ENCODE measurements at regions of chr9 and their contacts with region 1.

Region 1: DNA sequence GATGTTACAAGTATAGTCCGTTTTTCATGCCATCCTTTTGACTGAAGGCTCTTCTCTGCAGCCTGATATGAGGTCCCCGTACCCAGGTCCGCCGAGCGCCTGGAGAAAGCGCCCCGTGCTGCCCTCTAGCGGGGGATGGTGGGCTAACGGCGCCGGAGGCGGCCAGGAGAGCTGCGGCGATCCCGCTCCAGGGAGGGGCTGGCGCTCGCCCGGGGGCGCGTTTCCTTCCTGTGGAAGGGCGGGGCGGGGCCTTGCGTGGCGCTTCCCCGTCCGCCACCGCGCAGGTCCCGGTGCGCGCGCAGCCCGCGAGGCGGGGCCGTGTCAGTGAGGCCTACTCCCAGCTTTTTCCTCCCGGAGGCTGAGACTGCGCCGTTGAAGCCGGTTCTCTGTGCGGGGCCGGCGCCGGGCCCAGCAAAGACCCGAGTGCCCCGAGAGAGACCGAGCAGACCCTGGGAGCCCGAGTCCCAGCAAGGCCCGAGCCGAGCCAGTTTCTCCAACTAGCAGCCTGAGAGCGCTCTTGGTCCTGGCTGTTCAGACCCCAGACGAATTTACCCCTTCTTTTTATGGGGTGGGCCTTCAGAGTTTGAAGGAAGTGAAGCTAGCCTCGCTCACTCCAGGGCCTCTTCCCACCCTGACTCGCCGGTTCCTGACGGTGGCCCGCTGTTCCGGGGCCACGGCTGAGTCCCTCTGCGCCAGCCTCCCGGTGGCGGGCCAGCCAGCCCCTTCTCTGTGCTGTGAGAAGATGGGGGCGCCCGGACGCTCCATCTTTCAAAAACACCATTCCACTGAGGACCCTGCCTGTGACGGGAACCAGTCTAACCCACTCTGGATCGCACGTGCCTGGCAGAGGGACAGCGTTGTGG is 9.7 kb upstream of the PHF2 start:
- DNase-seq: peak; percentile 96 to 100 (median 98)
- H3K4me3 ChIP-seq: peak overlapping the region; percentile 44 to 89 (median 73)
- H3K27ac ChIP-seq: peak overlapping the region; percentile 75 to 99 (median 95)
- H3K27me3 ChIP-seq: no peaks in the 10 kb centered on the region
- CTCF ChIP-seq: peak; percentile 75 to 100 (median 98)

Region 2: DNA sequence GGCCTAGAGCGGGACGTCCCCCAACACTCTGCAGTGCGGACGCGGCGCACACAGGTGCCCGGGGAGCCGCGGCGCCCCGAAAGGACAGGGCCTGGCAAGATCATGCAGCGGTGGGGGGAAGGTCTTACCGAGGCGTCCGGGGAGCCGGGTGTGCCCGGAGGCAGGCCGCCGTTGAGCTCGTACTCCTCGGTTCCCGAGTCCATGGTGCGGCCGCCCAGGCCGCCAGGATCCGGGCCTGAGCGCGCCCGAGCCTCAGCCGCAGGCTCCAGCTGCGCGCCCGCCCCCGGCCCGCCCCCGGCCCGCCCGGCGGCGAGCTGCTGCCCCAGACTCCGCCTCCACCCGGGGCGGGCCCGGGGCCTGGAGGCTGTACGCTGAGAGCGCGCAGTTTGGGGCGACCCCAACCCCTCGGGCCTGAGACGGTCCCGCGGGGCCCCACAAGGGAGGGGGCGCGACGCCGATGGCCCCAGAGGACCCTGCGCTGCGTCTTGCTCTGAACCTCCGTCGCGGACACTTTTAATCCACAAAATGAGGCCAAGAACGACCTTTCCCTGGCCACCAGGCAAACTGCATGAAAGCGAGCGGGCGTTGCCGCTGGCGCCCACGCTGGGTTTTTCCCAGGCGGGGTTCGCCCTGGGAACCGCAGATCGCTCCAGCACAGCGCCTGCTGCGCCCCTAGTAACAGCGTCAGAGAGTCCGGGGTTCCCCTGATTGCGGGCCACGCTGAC is 432.5 kb before region 1 on chr9 and contains the start of gene NINJ1:
- intact Hi-C with region 1: loop called in 1 of 2 experiments (anchors 10 kb)
- DNase-seq: peak in 3 of 10 donors; percentile 59 to 84 (median 74)
- H3K4me3 ChIP-seq: peak within 1 kb of the TSS; percentile 65 to 98 (median 85)
- H3K27ac ChIP-seq: peak within 1 kb of the TSS; percentile 49 to 96 (median 86)
- H3K27me3 ChIP-seq: no peaks in the 10 kb centered on the region
- CTCF ChIP-seq: peak in 2 of 56 donors; percentile 3 to 9
- total RNA-seq, gene NINJ1: 22.7 to 61.9 (median 33.5) TPM

Region 3: GRCh38 chr9:93159601-93160471 is 406.8 kb before region 1 on chr9:
- intact Hi-C with region 1: loop called in 1 of 2 experiments (anchors 5 kb)
- DNase-seq: peak; percentile 75 to 89 (median 78)
- H3K4me3 ChIP-seq: peak overlapping the region in 1 of 59 donors; percentile 16
- H3K27ac ChIP-seq: no peak overlapping the region
- H3K27me3 ChIP-seq: no peaks in the 10 kb centered on the region
- CTCF ChIP-seq: peak; percentile 71 to 98 (median 92)

Region 4: GRCh38 chr9:93453047-93453914 is 113.4 kb before region 1 on chr9 and contains the start of gene FAM120AOS:
- intact Hi-C with region 1: loop called (anchors 1 to 2 kb)
- DNase-seq: peak; percentile 88 to 99 (median 96)
- H3K4me3 ChIP-seq: peak within 1 kb of the TSS; percentile 64 to 97 (median 86)
- H3K27ac ChIP-seq: peak within 1 kb of the TSS; percentile 65 to 99 (median 94)
- H3K27me3 ChIP-seq: no peaks in the 10 kb centered on the region
- CTCF ChIP-seq: peak in 25 of 56 donors; percentile 9 to 55 (median 25)
- total RNA-seq, gene FAM120AOS: 34.2 to 62.8 (median 46.0) TPM

Measured in dorsolateral prefrontal cortex (tissue), 120 donors.